Natural killer cell (primary cell): ENCODE measurements at regions of chr3 and their contacts with region 1.

Region 1: GRCh38 chr3:56801662-56802377 is at the start of gene ARHGEF3:
- DNase-seq: peak; percentile 84 to 93
- ATAC-seq: peak; percentile 85 to 95 (median 91)
- H3K4me3 ChIP-seq: peak within 1 kb of the TSS; percentile 99
- H3K4me3 Mint-ChIP-seq: peak within 1 kb of the TSS; percentile 90
- H3K27ac ChIP-seq: peak within 1 kb of the TSS; percentile 72
- H3K27ac Mint-ChIP-seq: peak within 1 kb of the TSS; percentile 92
- H3K4me1 ChIP-seq: peaks cover 28% of the 10 kb centered on the region
- H3K4me1 Mint-ChIP-seq: peaks cover 43 to 45% of the 10 kb centered on the region in 2 donors
- H3K27me3 ChIP-seq: no peaks in the 10 kb centered on the region
- H3K27me3 Mint-ChIP-seq: no peaks in the 10 kb centered on the region
- CTCF ChIP-seq: peak; percentile 70
- total RNA-seq, gene ARHGEF3: 112 to 211 (median 135) TPM

Region 2: GRCh38 chr3:56702490-56703315 is 99.1 kb before region 1 on chr3:
- intact Hi-C with region 1: loop called (anchors 1 kb)
- DNase-seq: peak in 1 of 2 donors; percentile 89
- ATAC-seq: peak; percentile 77 to 83 (median 82)
- H3K4me3 ChIP-seq: no peak overlapping the region
- H3K4me3 Mint-ChIP-seq: no peak overlapping the region
- H3K27ac ChIP-seq: no peak overlapping the region
- H3K27ac Mint-ChIP-seq: peak overlapping the region in 1 of 2 donors; percentile 50
- H3K4me1 ChIP-seq: peaks cover 12% of the 10 kb centered on the region
- H3K4me1 Mint-ChIP-seq: peaks cover 16% of the 10 kb centered on the region in 2 donors
- H3K27me3 ChIP-seq: no peaks in the 10 kb centered on the region
- H3K27me3 Mint-ChIP-seq: no peaks in the 10 kb centered on the region
- CTCF ChIP-seq: peak; percentile 89

Region 3: GRCh38 chr3:56783644-56784447 is 18.0 kb before region 1 on chr3:
- intact Hi-C with region 1: loop called (anchors 1 kb)
- DNase-seq: peak; percentile 62 to 85
- ATAC-seq: peak; percentile 84 to 95 (median 94)
- H3K4me3 ChIP-seq: peak overlapping the region; percentile 2
- H3K4me3 Mint-ChIP-seq: peak overlapping the region; percentile 86
- H3K27ac ChIP-seq: peak overlapping the region; percentile 86
- H3K27ac Mint-ChIP-seq: peak overlapping the region; percentile 85 to 92
- H3K4me1 ChIP-seq: peaks cover 87% of the 10 kb centered on the region
- H3K4me1 Mint-ChIP-seq: peaks cover 95 to 97% of the 10 kb centered on the region in 2 donors
- H3K27me3 ChIP-seq: no peaks in the 10 kb centered on the region
- H3K27me3 Mint-ChIP-seq: no peaks in the 10 kb centered on the region
- CTCF ChIP-seq: no peak

Region 4: DNA sequence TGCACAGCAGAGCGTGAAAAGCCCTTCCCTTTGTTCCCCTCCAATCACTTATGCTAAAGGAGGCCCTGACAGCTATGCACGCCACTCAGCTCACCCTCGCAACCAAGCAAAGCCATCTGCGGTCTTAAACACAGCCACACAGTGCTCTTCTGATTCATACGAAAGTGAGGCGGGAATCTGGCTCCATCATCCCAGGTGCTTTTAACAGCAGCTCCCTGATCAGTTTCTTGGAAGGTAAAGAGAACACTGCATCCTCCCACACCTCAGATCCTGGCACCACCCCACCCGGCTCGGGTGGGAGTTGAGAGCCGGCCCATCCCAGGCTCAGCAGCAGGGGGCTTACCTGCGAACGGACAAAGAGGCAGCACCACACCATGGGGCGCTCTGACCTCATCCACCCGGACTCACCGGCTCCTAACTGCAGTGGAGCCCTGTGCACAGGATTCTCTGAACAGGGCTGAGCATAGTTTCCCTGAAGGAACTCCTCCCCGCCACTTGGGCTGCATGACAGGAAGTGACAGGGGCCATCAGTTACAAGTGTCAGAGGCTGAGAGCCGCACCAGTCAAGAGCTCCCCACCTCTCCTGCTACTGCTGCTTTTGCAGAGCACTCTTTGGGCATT is 114.3 kb after region 1 on chr3:
- intact Hi-C with region 1: loop called (anchors 5 kb)
- DNase-seq: peak; percentile 54 to 86
- ATAC-seq: peak; percentile 93 to 95 (median 93)
- H3K4me3 ChIP-seq: peak overlapping the region; percentile 60
- H3K4me3 Mint-ChIP-seq: peak overlapping the region; percentile 86
- H3K27ac ChIP-seq: peak overlapping the region; percentile 75
- H3K27ac Mint-ChIP-seq: peak overlapping the region; percentile 80 to 85
- H3K4me1 ChIP-seq: peaks cover 39% of the 10 kb centered on the region
- H3K4me1 Mint-ChIP-seq: peaks cover 46 to 57% of the 10 kb centered on the region in 2 donors
- H3K27me3 ChIP-seq: no peaks in the 10 kb centered on the region
- H3K27me3 Mint-ChIP-seq: no peaks in the 10 kb centered on the region
- CTCF ChIP-seq: no peak

Region 5: GRCh38 chr3:57227204-57227929 is 425.5 kb after region 1 on chr3 and contains the start of gene APPL1:
- intact Hi-C with region 1: loop called (anchors 5 kb)
- DNase-seq: peak; percentile 86 to 93
- ATAC-seq: peak; percentile 86 to 94 (median 93)
- H3K4me3 ChIP-seq: peak within 1 kb of the TSS; percentile 71
- H3K4me3 Mint-ChIP-seq: peak within 1 kb of the TSS; percentile 92
- H3K27ac ChIP-seq: peak within 1 kb of the TSS; percentile 49
- H3K27ac Mint-ChIP-seq: peak within 1 kb of the TSS; percentile 75 to 85
- H3K4me1 ChIP-seq: peaks cover 12% of the 10 kb centered on the region
- H3K4me1 Mint-ChIP-seq: peaks cover 21 to 25% of the 10 kb centered on the region in 2 donors
- H3K27me3 ChIP-seq: no peaks in the 10 kb centered on the region
- H3K27me3 Mint-ChIP-seq: no peaks in the 10 kb centered on the region
- CTCF ChIP-seq: no peak
- total RNA-seq, gene APPL1: 29.6 to 40.8 (median 38.2) TPM